Panc1 (cell line): ENCODE measurements at regions of chr9 and their contacts with region 1.

Region 1: GRCh38 chr9:105881654-105882349 is 187.5 kb downstream of the TMEM38B start:
- DNase-seq: peak; percentile 36
- ATAC-seq: peak; percentile 60; the same call in 1 of the 2 replicates
- H3K4me3 ChIP-seq: no peak overlapping the region; a peak in 1 of 4 replicates
- H3K27ac ChIP-seq: no peak overlapping the region
- H3K4me1 ChIP-seq: no peaks in the 10 kb centered on the region
- H3K27me3 ChIP-seq: no peaks in the 10 kb centered on the region
- CTCF ChIP-seq: peak; percentile 85

Region 2: GRCh38 chr9:105828596-105829213 is 53.1 kb before region 1 on chr9:
- CTCF ChIA-PET with region 1: no interaction called
- POLR2A ChIA-PET with region 1: no interaction called
- in situ Hi-C with region 1: no loop called
- intact Hi-C with region 1: no loop called
- DNase-seq: no peak
- ATAC-seq: no peak
- H3K4me3 ChIP-seq: no peak overlapping the region
- H3K27ac ChIP-seq: no peak overlapping the region
- H3K4me1 ChIP-seq: no peaks in the 10 kb centered on the region
- H3K27me3 ChIP-seq: no peaks in the 10 kb centered on the region
- CTCF ChIP-seq: no peak

Region 3: DNA sequence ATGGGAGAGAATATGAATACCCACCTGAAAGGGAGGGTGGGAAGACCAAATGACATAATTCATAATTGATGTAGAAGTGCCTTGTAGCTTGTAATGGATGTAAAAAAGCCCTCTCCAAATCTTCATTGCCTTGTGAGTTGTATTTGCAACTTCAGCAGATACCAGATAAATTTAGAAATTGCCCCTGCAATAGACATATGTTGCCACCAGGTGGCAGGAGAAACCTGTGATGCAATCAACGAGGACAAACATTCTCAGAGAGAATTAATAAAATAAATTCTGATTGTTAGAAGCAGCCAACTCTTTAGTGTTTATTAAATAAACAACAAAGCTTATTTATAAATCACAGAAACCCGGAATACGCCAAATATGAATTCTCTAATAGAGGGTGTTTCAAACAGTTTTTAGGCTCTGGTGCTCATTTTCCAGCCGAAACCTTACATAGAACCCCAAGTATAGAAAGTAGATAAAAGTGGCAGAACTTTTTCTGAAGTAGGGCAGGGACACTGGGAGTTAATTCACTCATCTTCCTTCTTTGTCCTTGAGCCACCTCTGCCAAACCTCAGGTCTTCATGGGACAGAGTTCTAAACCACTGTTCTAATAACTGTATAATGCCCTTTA is 39.7 kb before region 1 on chr9:
- CTCF ChIA-PET with region 1: interaction called, 5 read pairs
- POLR2A ChIA-PET with region 1: no interaction called
- in situ Hi-C with region 1: no loop called
- intact Hi-C with region 1: loop called (anchors 2 kb)
- DNase-seq: no peak
- ATAC-seq: no peak
- H3K4me3 ChIP-seq: no peak overlapping the region
- H3K27ac ChIP-seq: no peak overlapping the region
- H3K4me1 ChIP-seq: no peaks in the 10 kb centered on the region
- H3K27me3 ChIP-seq: no peaks in the 10 kb centered on the region
- CTCF ChIP-seq: peak; percentile 76; the same call in 1 of the 2 replicates